ENCODE measurements at regions of chr9 and their contacts with region 1.

Region 1: DNA sequence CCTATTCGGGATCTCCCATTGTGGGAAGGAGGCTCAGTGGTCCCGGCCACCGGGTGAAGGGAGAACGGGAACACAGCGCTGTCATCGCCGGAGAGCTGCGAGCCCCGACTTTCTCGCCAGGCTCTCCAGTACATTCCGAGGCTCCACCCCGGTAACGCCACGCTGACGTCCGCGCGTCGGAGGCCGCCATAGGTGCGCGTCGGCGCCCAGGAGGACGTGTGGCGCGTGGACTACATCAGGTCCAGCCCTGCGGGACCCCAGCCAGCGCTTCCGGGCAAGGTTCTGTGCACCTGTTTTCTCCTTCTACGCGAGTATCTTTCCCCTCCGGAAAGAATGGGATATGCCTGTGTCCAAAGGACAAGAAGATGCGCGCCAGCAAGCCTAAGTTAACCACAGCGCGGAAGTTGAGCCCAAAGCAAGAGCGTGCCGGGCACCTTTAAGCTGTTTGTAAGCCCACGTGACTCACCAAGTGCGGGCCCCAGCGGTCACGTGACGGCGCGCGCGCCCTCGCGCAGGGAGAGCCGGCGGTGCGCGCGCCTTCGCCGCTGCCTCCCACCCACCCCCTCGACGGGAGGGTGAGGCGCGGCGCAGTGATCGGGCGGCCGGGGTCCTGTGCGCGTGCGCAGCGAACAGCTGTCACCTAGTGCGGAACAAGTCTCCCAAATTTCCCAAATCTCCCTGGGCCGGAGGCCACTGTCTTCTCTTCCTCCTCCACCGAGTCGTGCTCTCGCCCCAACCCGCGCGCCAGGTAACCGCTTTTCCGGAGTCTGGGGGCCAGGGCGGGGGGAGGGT is at the start of gene KDM4C:
- DNase-seq: peak; percentile 90
- ATAC-seq: peak; percentile 89
- H3K4me3 ChIP-seq: peak within 1 kb of the TSS; percentile 81 to 91
- H3K27ac ChIP-seq: peak within 1 kb of the TSS; percentile 91
- H3K4me1 ChIP-seq: peaks cover 7 to 23% of the 10 kb centered on the region in 2 experiments; a peak in 3 of 4 replicates
- H3K27me3 ChIP-seq: no peaks in the 10 kb centered on the region
- CTCF ChIP-seq: no peak
- POLR2A ChIP-seq: peak; percentile 94
- RAD21 ChIP-seq: no peak
- total RNA-seq, gene KDM4C: 16.8 TPM

Region 2: GRCh38 chr9:6495466-6495865 is 262.2 kb before region 1 on chr9:
- CTCF ChIA-PET with region 1: no interaction called
- POLR2A ChIA-PET with region 1: no interaction called
- RAD21 ChIA-PET with region 1: no interaction called
- intact Hi-C with region 1: no loop called
- DNase-seq: no peak
- ATAC-seq: peak; percentile 47; the same call in 1 of the 2 replicates
- H3K4me3 ChIP-seq: no peak overlapping the region
- H3K27ac ChIP-seq: no peak overlapping the region
- H3K4me1 ChIP-seq: no peaks in the 10 kb centered on the region
- H3K27me3 ChIP-seq: no peaks in the 10 kb centered on the region
- CTCF ChIP-seq: peak; percentile 3 to 16 (median 11); a peak in 1 of 6 replicates
- POLR2A ChIP-seq: no peak
- RAD21 ChIP-seq: peak; percentile 30; the same call in 1 of the 2 replicates

Region 3: GRCh38 chr9:6512085-6512657 is 245.5 kb before region 1 on chr9:
- CTCF ChIA-PET with region 1: no interaction called
- POLR2A ChIA-PET with region 1: no interaction called
- RAD21 ChIA-PET with region 1: no interaction called
- intact Hi-C with region 1: no loop called
- DNase-seq: no peak
- ATAC-seq: no peak
- H3K4me3 ChIP-seq: no peak overlapping the region
- H3K27ac ChIP-seq: no peak overlapping the region
- H3K4me1 ChIP-seq: no peaks in the 10 kb centered on the region
- H3K27me3 ChIP-seq: no peaks in the 10 kb centered on the region
- CTCF ChIP-seq: no peak
- POLR2A ChIP-seq: no peak
- RAD21 ChIP-seq: no peak

Region 4: DNA sequence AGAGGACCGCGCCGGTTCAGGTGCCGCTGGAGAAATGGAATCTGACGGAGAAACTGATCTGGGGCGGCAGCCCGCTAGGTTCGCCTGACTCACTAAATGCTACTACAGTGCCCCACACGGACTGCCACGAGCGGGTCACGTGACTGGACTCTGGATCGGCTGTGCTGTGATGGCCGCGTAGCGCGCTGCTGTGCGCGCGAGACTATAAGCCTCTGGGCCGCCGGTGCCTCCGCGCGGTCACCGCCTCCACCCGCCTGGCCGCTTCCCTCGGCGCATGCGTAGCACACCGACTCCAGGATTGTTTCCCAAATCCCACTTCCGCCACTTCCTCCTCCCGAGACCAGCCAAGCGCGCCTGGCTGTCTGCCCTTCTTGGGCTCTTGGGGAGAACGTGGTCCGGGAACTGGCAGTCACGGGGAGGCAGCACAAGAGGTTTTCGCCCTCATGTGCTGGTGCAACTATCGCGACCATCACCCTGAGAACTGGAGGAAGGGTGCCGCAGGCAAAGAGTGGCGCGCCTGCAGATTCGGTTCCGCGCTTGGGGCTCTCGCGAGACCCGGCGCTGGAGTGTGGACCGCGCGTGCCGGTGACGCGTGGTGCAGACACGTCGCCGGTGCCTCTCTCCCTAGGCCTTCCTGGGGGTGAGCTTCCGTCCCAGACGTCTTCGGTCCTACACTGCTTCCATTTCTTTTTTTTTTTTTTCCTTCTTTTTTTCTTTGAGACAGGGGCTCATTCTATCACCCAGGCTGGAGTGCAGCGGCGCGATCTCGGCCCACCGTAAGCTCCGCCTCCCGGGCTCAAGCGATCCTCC is 76.3 kb before region 1 on chr9:
- CTCF ChIA-PET with region 1: interaction called, 3 read pairs
- POLR2A ChIA-PET with region 1: no interaction called
- RAD21 ChIA-PET with region 1: no interaction called
- intact Hi-C with region 1: loop called (anchors 2 kb)
- DNase-seq: peak; percentile 95
- ATAC-seq: peak; percentile 91
- H3K4me3 ChIP-seq: peak overlapping the region; percentile 91 to 92
- H3K27ac ChIP-seq: peak overlapping the region; percentile 99
- H3K4me1 ChIP-seq: peaks cover 6 to 22% of the 10 kb centered on the region in 2 experiments; a peak in 3 of 4 replicates
- H3K27me3 ChIP-seq: no peaks in the 10 kb centered on the region
- CTCF ChIP-seq: no peak
- POLR2A ChIP-seq: peak; percentile 87
- RAD21 ChIP-seq: no peak

Measured in HCT116 (cell line).